Psoas muscle (tissue), 8 donors: ENCODE measurements at regions of chr1 and their contacts with region 1.

Region 1: DNA sequence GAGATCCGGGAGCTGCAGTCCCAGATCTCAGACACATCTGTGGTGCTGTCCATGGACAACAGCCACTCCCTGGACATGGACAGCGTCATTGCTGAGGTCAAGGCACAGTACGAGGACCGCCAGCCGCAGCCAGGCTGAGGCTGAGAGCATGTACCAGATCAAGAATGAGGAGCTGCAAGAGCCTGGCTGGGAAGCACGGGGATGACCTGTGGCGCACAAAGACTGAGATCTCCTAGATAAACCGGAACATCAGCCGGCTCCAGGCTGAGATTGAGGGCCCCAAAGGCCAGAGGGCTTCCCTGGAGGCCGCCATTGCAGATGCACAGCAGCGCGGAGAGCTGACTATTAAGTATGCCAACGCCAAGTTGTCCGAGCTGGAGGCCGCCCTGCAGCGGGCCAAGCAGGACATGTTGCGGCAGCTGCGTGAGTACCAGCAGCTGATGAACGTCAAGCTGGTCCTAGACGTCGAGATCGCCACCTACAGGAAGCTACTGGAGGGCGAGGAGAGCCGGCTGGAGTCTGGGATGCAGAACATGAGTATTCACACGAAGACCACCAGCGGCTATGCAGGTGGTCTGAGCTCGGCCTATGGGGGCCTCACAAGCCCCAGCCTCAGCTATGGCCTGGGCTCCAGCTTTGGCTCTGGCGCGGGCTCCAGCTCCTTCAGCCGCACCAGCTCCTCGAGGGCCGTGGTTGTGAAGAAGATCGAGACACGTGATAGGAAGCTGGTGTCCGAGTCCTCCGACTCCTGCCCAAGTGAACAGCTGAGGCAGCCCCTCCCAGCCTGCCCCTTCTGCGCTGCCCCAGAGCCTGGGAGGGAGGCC is 25.5 kb downstream of the ETV3L start:
- DNase-seq: peak; percentile 79 to 85
- ATAC-seq: peak; percentile 66 to 88 (median 81)
- H3K4me3 ChIP-seq: peak overlapping the region; percentile 49
- H3K27ac ChIP-seq: no peak overlapping the region
- H3K4me1 ChIP-seq: peaks cover 6% of the 10 kb centered on the region
- H3K27me3 ChIP-seq: peaks cover 0 to 8% (median 0%) of the 10 kb centered on the region in 3 donors
- CTCF ChIP-seq: peak; percentile 72

Region 2: DNA sequence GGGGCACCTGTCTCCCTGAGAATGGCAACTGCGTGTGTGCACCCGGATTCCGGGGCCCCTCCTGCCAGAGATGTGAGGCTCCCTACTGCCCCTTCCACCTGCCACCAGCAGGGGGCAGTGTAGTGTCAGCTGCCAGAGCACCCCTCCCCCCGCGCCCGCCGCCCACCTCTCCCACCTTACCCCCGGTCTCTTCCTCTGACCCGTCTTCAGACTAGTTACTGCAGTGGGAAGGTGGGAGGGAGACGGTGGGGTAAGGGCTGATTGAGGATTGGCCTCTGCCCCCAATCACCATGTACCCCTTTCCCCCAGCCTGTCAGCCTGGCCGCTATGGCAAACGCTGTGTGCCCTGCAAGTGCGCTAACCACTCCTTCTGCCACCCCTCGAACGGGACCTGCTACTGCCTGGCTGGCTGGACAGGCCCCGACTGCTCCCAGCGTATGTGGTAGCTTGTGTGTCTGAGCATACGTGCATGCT is 163.8 kb before region 1 on chr1:
- intact Hi-C with region 1: loop called in 1 of 2 experiments (anchors 10 kb)
- DNase-seq: peak in 1 of 2 donors; percentile 68
- ATAC-seq: peak; percentile 24 to 71 (median 52)
- H3K4me3 ChIP-seq: no peak overlapping the region
- H3K27ac ChIP-seq: no peak overlapping the region
- H3K4me1 ChIP-seq: no peaks in the 10 kb centered on the region
- H3K27me3 ChIP-seq: peaks cover 0 to 43% (median 0%) of the 10 kb centered on the region in 3 donors
- CTCF ChIP-seq: peak; percentile 81

Region 3: GRCh38 chr1:156961709-156962108 is 112.4 kb before region 1 on chr1:
- intact Hi-C with region 1: loop called in 1 of 2 experiments (anchors 2 kb)
- DNase-seq: no peak
- ATAC-seq: no peak
- H3K4me3 ChIP-seq: no peak overlapping the region
- H3K27ac ChIP-seq: no peak overlapping the region
- H3K4me1 ChIP-seq: peaks cover 4% of the 10 kb centered on the region
- H3K27me3 ChIP-seq: no peaks in the 10 kb centered on the region
- CTCF ChIP-seq: no peak

Region 4: GRCh38 chr1:156987715-156988114 is 86.4 kb before region 1 on chr1:
- intact Hi-C with region 1: loop called in 1 of 2 experiments (anchors 10 kb)
- DNase-seq: no peak
- ATAC-seq: no peak
- H3K4me3 ChIP-seq: no peak overlapping the region
- H3K27ac ChIP-seq: no peak overlapping the region
- H3K4me1 ChIP-seq: no peaks in the 10 kb centered on the region
- H3K27me3 ChIP-seq: no peaks in the 10 kb centered on the region
- CTCF ChIP-seq: no peak

Region 5: DNA sequence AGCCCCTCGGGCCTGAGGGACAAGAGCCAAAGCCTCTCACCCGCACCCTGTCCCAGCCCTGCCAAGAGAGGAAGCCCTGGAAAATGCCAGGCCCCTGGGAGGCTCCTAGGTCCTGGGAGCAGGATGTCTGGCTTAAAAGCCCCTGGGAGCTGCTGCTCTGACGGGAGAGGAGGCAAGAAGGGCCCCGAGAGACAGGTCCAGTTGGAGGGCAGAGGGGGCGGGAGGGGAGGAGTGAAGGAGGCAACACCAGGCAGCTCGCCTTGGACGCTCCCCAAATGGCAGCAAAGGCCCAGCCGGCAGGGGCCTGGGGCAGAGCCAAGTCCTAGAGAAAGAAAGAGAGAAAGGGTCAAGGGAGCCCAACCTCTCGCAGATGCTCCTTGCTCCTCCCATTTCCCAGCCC is 18.6 kb after region 1 on chr1:
- intact Hi-C with region 1: no loop called
- DNase-seq: peak; percentile 45 to 65
- ATAC-seq: no peak
- H3K4me3 ChIP-seq: no peak overlapping the region
- H3K27ac ChIP-seq: no peak overlapping the region
- H3K4me1 ChIP-seq: no peaks in the 10 kb centered on the region
- H3K27me3 ChIP-seq: no peaks in the 10 kb centered on the region
- CTCF ChIP-seq: no peak

Region 6: DNA sequence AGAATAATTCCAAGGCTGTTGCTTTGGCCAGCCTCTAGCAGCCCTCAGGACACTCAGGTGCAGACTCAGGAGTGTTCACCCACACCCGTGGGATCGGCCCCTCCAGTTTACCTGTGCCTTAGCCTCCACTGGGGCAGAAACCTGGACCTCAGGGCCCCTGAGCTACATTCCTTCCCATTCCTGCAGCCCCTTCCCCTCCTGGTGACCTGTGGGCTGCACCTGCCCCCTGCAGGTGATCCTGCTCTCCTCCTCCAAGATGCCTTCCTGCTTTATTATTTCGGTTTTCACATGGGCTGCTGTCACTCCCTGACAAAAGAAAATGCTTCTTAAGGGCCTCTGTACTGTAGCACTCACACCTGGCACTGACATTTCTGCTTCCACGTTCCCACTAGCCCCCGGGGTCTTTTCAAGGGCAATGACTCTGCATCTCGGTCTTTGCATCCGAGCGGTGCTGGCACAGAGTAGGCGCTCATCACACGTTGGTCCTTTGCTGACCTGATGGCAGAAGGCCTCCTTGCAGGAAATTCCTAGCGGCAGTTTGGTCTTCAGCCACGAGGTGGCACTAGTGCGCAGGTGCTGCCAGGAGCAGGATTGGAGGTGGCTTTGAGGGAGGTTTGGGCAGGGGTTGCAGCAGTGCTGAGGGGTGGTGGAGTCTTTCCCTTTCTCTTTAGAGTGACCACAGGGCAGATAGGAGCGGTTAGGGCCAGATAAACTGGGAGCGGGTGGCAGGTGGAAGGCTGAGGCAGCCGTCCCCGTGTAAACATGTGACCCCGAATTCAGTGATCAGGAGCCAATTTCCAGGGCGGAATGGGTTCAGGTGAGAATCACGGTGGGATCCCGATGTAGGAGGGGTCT is 89.3 kb after region 1 on chr1:
- intact Hi-C with region 1: no loop called
- DNase-seq: peak; percentile 70 to 80
- ATAC-seq: peak; percentile 61 to 83 (median 64)
- H3K4me3 ChIP-seq: peak overlapping the region; percentile 22
- H3K27ac ChIP-seq: no peak overlapping the region
- H3K4me1 ChIP-seq: no peaks in the 10 kb centered on the region
- H3K27me3 ChIP-seq: no peaks in the 10 kb centered on the region
- CTCF ChIP-seq: peak; percentile 84

Region 7: DNA sequence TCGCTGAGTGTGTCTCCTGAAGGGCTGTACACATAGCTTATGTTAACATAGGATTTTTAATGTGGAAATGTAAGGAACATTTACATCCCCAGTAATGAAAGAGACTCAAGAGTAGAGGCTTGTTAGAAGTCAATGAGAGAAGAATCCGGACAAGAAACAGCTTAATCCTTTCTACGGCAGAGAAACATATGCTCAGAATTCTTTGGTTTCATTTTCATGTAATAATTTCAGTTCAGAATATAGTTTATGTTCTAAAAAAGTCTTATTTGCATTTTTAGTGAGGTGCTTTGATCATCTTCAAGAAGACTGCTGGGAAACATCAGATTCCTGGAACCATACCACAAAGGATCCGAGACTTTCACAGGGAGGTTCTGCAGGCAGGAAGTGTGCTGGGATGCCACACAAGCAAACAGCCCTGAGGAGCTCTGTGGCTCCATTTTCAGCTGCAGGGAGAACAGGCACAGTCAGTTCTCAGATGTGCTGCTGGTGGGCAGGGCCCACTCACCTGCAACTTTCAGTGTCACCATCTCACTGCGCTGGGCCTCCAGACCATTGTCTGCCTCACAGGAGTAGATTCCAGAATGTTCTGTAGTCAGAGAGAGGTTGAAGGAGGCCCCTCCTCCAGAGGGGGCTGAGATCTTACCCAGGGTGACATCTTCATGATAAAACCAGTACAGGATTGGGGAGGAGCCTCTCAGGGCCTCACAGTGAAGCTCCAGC is 449.8 kb after region 1 on chr1:
- intact Hi-C with region 1: no loop called
- DNase-seq: no peak
- ATAC-seq: no peak
- H3K4me3 ChIP-seq: no peak overlapping the region
- H3K27ac ChIP-seq: no peak overlapping the region
- H3K4me1 ChIP-seq: no peaks in the 10 kb centered on the region
- H3K27me3 ChIP-seq: peaks cover 0 to 3% (median 0%) of the 10 kb centered on the region in 3 donors
- CTCF ChIP-seq: no peak